ENCODE measurements at regions of chr6 and their contacts with region 1.

Region 1: GRCh38 chr6:131555992-131556391 is 17.0 kb upstream of the ARG1 start:
- DNase-seq: no peak
- ATAC-seq: no peak
- H3K4me3 ChIP-seq: no peak overlapping the region
- H3K4me3 Mint-ChIP-seq: no peak overlapping the region
- H3K27ac ChIP-seq: no peak overlapping the region
- H3K27ac Mint-ChIP-seq: no peak overlapping the region
- H3K4me1 ChIP-seq: no peaks in the 10 kb centered on the region
- H3K4me1 Mint-ChIP-seq: no peaks in the 10 kb centered on the region
- H3K27me3 ChIP-seq: no peaks in the 10 kb centered on the region
- H3K27me3 Mint-ChIP-seq: no peaks in the 10 kb centered on the region
- CTCF ChIP-seq: no peak

Region 2: GRCh38 chr6:131258816-131259476 is 297.0 kb before region 1 on chr6:
- CTCF ChIA-PET with region 1: no interaction called
- POLR2A ChIA-PET with region 1: no interaction called
- intact Hi-C with region 1: no loop called
- DNase-seq: no peak
- ATAC-seq: no peak
- H3K4me3 ChIP-seq: no peak overlapping the region
- H3K4me3 Mint-ChIP-seq: no peak overlapping the region
- H3K27ac ChIP-seq: no peak overlapping the region
- H3K27ac Mint-ChIP-seq: no peak overlapping the region
- H3K4me1 ChIP-seq: no peaks in the 10 kb centered on the region
- H3K4me1 Mint-ChIP-seq: no peaks in the 10 kb centered on the region
- H3K27me3 ChIP-seq: no peaks in the 10 kb centered on the region
- H3K27me3 Mint-ChIP-seq: no peaks in the 10 kb centered on the region
- CTCF ChIP-seq: no peak

Region 3: GRCh38 chr6:131519670-131520436 is 36.1 kb before region 1 on chr6:
- CTCF ChIA-PET with region 1: no interaction called
- POLR2A ChIA-PET with region 1: no interaction called
- intact Hi-C with region 1: loop called (anchors 2 kb)
- DNase-seq: peak; percentile 38
- ATAC-seq: peak; percentile 57
- H3K4me3 ChIP-seq: no peak overlapping the region
- H3K4me3 Mint-ChIP-seq: no peak overlapping the region
- H3K27ac ChIP-seq: no peak overlapping the region
- H3K27ac Mint-ChIP-seq: no peak overlapping the region
- H3K4me1 ChIP-seq: no peaks in the 10 kb centered on the region
- H3K4me1 Mint-ChIP-seq: no peaks in the 10 kb centered on the region
- H3K27me3 ChIP-seq: peaks cover 0 to 3% (median 1%) of the 10 kb centered on the region in 4 experiments
- H3K27me3 Mint-ChIP-seq: peaks cover 14% of the 10 kb centered on the region
- CTCF ChIP-seq: peak; percentile 64

Region 4: DNA sequence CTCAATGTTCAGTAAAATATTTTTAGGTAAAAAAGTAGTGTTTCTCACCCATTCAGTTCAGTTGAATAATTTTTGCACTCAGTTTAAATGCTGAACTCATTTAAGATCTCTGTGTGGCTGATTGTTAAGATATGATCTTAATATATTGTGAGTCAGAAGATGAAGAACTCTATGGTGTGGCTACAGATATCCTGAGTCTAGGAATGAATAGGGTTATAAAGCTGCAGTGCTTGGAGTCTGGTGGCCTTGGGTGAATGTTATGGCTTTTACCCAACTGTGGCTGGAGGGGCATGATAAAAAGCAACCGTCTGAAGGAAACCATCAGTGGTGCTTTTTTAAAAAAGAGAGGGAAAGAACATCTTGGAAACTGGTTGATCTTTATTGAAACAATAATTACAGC is 329.2 kb after region 1 on chr6:
- CTCF ChIA-PET with region 1: no interaction called
- POLR2A ChIA-PET with region 1: no interaction called
- intact Hi-C with region 1: no loop called
- DNase-seq: no peak
- ATAC-seq: no peak
- H3K4me3 ChIP-seq: no peak overlapping the region
- H3K4me3 Mint-ChIP-seq: no peak overlapping the region
- H3K27ac ChIP-seq: no peak overlapping the region
- H3K27ac Mint-ChIP-seq: no peak overlapping the region
- H3K4me1 ChIP-seq: no peaks in the 10 kb centered on the region
- H3K4me1 Mint-ChIP-seq: no peaks in the 10 kb centered on the region
- H3K27me3 ChIP-seq: no peaks in the 10 kb centered on the region
- H3K27me3 Mint-ChIP-seq: no peaks in the 10 kb centered on the region
- CTCF ChIP-seq: no peak